ENCODE measurements at regions of chr2 and their contacts with region 1.

Region 1: DNA sequence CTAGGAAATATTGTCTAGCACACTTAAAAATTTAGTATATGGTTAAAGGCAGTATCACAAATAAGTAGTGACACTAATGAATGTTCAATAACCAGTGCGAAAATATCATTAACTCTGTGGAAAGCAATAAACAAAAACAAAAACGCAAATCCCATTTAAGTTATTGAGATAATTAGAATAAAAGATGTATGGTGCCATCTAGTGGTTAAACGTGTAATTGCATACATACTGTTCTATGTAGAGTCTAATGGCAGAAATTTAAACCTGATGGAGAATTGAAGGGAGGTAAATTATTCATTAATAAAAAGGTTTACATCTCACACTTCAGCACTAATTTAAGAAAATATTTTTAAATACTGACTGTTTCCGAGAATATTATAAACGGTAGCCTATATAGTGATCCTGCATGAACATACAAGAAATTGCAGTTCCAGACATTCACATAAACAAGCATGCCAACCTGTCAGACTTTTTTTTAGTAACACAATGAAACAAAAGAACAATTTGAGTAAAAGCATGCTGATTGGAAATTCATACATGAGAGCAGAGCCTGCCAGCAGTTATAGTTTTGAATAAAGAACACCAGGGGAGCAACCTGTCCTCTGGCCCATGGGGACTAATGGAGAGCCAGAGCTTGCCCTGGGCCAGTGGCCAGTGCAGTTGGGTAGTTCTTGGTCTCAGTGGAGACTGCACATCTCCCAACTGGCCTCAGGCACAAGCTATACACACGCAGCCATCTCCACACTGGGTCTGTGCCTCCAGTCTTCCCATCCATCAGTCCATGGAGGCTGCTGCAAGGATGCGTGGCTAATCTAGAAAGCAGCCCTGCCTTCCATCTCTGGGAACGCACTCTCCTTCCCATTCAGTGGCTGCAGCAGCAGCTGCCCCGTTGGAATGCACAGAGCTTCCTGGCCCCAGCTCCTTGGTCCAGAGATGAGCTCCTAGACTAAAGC is 28.0 kb downstream of the GCG start:
- DNase-seq: no peak
- ATAC-seq: no peak
- H3K4me3 Mint-ChIP-seq: no peak overlapping the region
- H3K27ac Mint-ChIP-seq: no peak overlapping the region
- H3K4me1 Mint-ChIP-seq: peaks cover 15% of the 10 kb centered on the region
- H3K27me3 Mint-ChIP-seq: no peaks in the 10 kb centered on the region

Region 2: DNA sequence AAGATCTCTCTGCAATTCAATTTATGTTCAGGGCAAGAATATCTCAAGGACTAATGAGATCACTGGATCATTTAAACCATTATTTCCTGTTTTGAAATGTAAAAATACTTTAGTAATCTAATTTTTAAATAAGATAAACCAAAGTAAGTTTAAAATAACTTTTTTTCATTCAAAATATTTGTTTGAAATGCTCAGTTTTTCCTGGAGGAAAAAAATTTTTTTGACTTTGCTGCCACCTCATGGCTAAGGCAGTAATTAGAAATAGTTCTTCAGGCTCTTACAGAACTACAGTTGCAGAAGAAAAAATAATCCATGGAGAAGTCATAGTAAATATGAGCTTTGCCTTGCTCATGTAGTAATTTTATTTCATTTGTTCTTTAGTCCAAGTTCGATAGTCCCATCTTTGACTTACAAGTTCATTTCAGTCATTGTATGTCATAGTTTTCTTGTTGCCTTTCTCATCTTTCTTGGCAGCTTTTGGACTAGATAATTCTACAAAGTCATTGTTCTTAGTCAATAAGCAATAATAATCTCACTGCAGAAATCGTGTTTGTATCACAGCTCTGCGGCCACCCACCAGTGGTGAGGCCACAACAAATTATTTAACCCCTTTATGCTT is 177.5 kb before region 1 on chr2:
- CTCF ChIA-PET with region 1: interaction called, 25 read pairs
- POLR2A ChIA-PET with region 1: no interaction called
- intact Hi-C with region 1: loop called in 1 of 2 experiments (anchors 2 kb)
- DNase-seq: peak; percentile 30
- ATAC-seq: no peak
- H3K4me3 Mint-ChIP-seq: no peak overlapping the region
- H3K27ac Mint-ChIP-seq: no peak overlapping the region
- H3K4me1 Mint-ChIP-seq: no peaks in the 10 kb centered on the region
- H3K27me3 Mint-ChIP-seq: no peaks in the 10 kb centered on the region

Region 3: GRCh38 chr2:162007447-162008040 is 116.5 kb before region 1 on chr2:
- CTCF ChIA-PET with region 1: interaction called, 22 read pairs
- POLR2A ChIA-PET with region 1: no interaction called
- intact Hi-C with region 1: loop called (anchors 1 kb)
- DNase-seq: no peak
- ATAC-seq: no peak
- H3K4me3 Mint-ChIP-seq: no peak overlapping the region
- H3K27ac Mint-ChIP-seq: no peak overlapping the region
- H3K4me1 Mint-ChIP-seq: peaks cover 43% of the 10 kb centered on the region
- H3K27me3 Mint-ChIP-seq: no peaks in the 10 kb centered on the region

Region 4: DNA sequence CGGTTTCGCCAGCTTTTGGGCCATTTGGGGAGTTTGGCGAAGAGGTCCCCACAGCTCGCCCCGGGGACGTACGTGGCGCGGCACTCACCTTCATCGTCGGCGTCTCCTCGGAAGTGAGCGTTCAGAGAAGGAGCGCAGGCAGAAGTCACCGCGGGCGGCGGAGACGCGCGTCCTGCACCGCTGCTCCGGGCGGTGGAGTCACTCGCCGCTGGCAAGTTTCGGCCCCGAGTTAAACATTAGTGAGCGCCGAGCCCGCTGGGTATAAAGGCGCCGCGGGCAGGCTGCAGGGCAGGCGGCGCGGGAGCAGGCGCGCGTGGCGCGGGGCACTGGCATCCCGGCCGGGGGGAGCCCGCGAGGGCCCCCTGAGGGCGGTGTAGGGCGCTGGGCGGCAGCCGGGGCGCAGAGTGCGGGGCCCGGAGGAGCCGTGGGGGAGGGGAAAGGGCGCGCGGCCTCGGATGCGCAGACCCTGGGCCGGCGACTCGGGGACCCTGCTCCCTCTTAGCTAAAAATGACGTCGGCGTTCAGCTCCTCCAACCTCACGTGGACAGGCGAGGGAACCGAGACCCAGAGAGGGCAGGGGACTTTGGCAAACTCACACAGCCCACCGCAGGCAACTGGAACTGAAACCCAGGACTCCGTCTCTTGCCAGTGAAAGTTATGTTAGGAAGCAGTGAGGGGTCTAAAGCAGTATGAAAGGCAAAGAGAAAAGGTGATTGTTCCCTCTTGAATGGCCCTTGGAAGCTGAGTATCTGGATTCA is 50.0 kb before region 1 on chr2 and contains the start of gene DPP4:
- CTCF ChIA-PET with region 1: interaction called, 4 read pairs
- POLR2A ChIA-PET with region 1: no interaction called
- intact Hi-C with region 1: loop called in 1 of 2 experiments (anchors 5 kb)
- DNase-seq: peak; percentile 71
- ATAC-seq: peak; percentile 63
- H3K4me3 Mint-ChIP-seq: peak within 1 kb of the TSS; percentile 94
- H3K27ac Mint-ChIP-seq: peak within 1 kb of the TSS; percentile 91
- H3K4me1 Mint-ChIP-seq: peaks cover 43% of the 10 kb centered on the region
- H3K27me3 Mint-ChIP-seq: peaks cover 2% of the 10 kb centered on the region
- total RNA-seq, gene DPP4: 15.9 to 22.4 TPM